ENCODE measurements at regions of chr15 and their contacts with region 1.

Region 1: GRCh38 chr15:74781431-74782258 is at the start of gene CSK:
- DNase-seq: peak; percentile 84 to 92
- ATAC-seq: peak; percentile 81
- H3K4me3 ChIP-seq: peak within 1 kb of the TSS; percentile 94 to 96
- H3K27ac ChIP-seq: peak within 1 kb of the TSS in 1 of 2 donors; percentile 23
- H3K4me1 ChIP-seq: no peaks in the 10 kb centered on the region
- H3K27me3 ChIP-seq: no peaks in the 10 kb centered on the region
- total RNA-seq, gene CSK: 34.9 to 55.2 TPM

Region 2: GRCh38 chr15:74545880-74546656 is 235.6 kb before region 1 on chr15:
- intact Hi-C with region 1: no loop called
- DNase-seq: peak; percentile 99 to 100
- ATAC-seq: peak; percentile 91
- H3K4me3 ChIP-seq: no peak overlapping the region
- H3K27ac ChIP-seq: no peak overlapping the region
- H3K4me1 ChIP-seq: peaks cover 0 to 9% of the 10 kb centered on the region in 2 donors
- H3K27me3 ChIP-seq: no peaks in the 10 kb centered on the region

Region 3: DNA sequence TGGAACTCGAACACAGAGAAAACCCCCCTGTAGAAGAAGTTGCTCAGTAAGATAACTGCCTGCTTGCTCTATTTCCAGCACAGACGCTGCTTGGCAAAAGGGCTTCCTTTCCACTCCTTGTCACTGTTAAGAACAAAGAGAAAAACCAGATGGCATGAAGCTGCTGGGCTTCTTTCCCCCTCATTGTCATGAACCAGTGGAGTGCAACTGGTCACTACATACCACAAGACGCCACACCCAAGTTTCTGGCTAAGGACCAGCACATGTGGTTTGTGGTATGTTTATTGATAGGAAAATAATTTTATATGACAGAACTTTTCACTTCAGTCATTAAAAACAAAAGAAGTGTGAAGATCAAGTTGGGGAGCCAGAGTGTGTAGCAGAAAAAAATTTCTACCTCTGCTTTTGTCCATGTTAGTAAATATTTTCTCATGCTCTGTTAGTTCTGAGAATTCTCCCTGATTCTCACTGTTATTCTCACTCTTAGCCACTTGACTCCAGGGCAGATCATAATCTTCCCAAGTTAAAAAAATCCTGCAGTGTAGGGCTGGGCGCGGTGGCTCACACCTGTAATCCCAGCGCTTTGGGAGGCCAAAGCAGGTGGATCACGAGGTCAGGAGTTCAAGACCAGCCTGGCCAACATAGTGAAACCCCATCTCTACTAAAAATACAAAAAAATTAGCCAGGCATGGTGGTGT is 128.1 kb before region 1 on chr15:
- intact Hi-C with region 1: no loop called
- DNase-seq: no peak
- ATAC-seq: no peak
- H3K4me3 ChIP-seq: no peak overlapping the region
- H3K27ac ChIP-seq: no peak overlapping the region
- H3K4me1 ChIP-seq: no peaks in the 10 kb centered on the region
- H3K27me3 ChIP-seq: no peaks in the 10 kb centered on the region

Region 4: DNA sequence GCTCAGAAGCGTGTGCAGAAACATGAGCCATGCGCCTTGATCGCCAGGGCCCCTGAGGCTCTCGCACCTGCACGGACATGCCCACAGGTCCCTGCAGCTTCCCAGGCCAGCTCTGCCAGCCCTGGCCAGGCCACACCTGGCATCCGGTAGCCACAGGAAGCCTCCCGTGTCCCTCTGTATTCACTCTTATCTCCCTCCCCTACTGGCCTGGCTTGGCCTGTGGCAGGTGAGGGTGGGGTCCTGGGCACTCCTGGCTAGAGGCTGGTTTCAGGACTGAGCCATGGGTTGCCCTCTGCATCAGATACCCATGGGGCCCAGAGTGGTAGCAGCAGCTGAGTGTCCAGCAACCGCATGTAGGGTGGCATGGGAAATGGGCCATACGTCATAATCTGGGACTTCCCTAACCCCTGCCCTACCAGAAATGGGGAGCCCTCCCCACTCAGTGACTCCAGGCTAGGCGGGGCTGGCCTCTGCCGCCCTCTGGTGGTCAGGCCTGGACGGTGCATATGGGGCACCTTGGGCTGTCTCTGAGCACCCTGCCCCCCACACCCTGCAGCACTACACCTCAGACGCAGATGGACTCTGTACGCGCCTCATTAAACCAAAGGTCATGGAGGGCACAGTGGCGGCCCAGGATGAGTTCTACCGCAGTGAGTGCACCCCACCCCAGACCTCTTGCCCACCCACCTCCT is 18.4 kb after region 1 on chr15:
- intact Hi-C with region 1: loop called in 1 of 2 experiments (anchors 2 kb)
- DNase-seq: peak; percentile 86 to 92
- ATAC-seq: peak; percentile 89
- H3K4me3 ChIP-seq: no peak overlapping the region
- H3K27ac ChIP-seq: no peak overlapping the region
- H3K4me1 ChIP-seq: no peaks in the 10 kb centered on the region
- H3K27me3 ChIP-seq: no peaks in the 10 kb centered on the region

Region 5: GRCh38 chr15:74835307-74835823 is 53.7 kb after region 1 on chr15:
- intact Hi-C with region 1: loop called (anchors 5 kb)
- DNase-seq: peak; percentile 67 to 84
- ATAC-seq: no peak
- H3K4me3 ChIP-seq: no peak overlapping the region
- H3K27ac ChIP-seq: no peak overlapping the region
- H3K4me1 ChIP-seq: no peaks in the 10 kb centered on the region
- H3K27me3 ChIP-seq: no peaks in the 10 kb centered on the region

Region 6: GRCh38 chr15:74873036-74873755 is 91.6 kb after region 1 on chr15 and contains the start of gene SCAMP2:
- intact Hi-C with region 1: no loop called
- DNase-seq: peak; percentile 96 to 98
- ATAC-seq: peak; percentile 97
- H3K4me3 ChIP-seq: peak within 1 kb of the TSS; percentile 70 to 76
- H3K27ac ChIP-seq: peak within 1 kb of the TSS in 1 of 2 donors; percentile 60
- H3K4me1 ChIP-seq: peaks cover 0 to 2% of the 10 kb centered on the region in 2 donors
- H3K27me3 ChIP-seq: no peaks in the 10 kb centered on the region
- total RNA-seq, gene SCAMP2: 62.2 to 65.0 TPM

Measured in aorta (tissue), 5 donors.